ENCODE measurements at regions of chr12 and their contacts with region 1.

Region 1: GRCh38 chr12:4320853-4321701 is at the start of gene TIGAR:
- DNase-seq: peak; percentile 92 to 96 (median 93)
- H3K4me3 ChIP-seq: peak within 1 kb of the TSS; percentile 26 to 76 (median 56)
- H3K27ac ChIP-seq: peak within 1 kb of the TSS; percentile 83 to 94 (median 85)
- H3K4me1 ChIP-seq: peaks cover 0 to 11% of the 10 kb centered on the region in 2 donors
- H3K27me3 ChIP-seq: no peaks in the 10 kb centered on the region
- CTCF ChIP-seq: no peak
- POLR2A ChIP-seq: peak; percentile 74 to 94
- total RNA-seq, gene TIGAR: 2.5 to 20.5 (median 10.7) TPM

Region 2: DNA sequence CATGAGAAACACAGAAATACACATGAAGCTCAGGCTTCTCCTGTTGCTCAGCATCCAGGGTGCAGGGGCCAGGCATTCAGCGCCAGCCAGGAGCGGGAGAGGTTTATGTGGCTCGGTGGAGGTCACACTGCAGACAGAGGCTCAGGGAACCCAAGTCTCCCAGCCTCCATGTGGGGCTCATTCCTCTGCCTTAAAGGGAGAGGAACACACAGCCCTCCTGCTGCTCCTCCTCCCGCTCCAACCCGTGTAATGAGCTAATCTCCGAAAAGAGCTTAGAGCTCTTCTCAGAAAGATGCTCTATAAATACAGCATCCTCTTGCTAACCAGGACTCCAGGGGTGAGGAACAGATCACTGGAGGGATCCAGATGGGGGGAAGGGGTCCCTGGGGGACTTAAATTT is 96.4 kb after region 1 on chr12:
- intact Hi-C with region 1: loop called in 1 of 2 experiments (anchors 10 kb)
- DNase-seq: no peak
- H3K4me3 ChIP-seq: no peak overlapping the region
- H3K27ac ChIP-seq: no peak overlapping the region
- H3K4me1 ChIP-seq: no peaks in the 10 kb centered on the region
- H3K27me3 ChIP-seq: peaks cover 4% of the 10 kb centered on the region
- CTCF ChIP-seq: no peak
- POLR2A ChIP-seq: no peak

Region 3: GRCh38 chr12:4829161-4829792 is 508.2 kb after region 1 on chr12:
- intact Hi-C with region 1: no loop called
- DNase-seq: no peak
- H3K4me3 ChIP-seq: no peak overlapping the region
- H3K27ac ChIP-seq: no peak overlapping the region
- H3K4me1 ChIP-seq: no peaks in the 10 kb centered on the region
- H3K27me3 ChIP-seq: no peaks in the 10 kb centered on the region
- CTCF ChIP-seq: no peak
- POLR2A ChIP-seq: no peak

Measured in adrenal gland (tissue), 19 donors.